ENCODE measurements at regions of chr2 and their contacts with region 1.

Region 1: DNA sequence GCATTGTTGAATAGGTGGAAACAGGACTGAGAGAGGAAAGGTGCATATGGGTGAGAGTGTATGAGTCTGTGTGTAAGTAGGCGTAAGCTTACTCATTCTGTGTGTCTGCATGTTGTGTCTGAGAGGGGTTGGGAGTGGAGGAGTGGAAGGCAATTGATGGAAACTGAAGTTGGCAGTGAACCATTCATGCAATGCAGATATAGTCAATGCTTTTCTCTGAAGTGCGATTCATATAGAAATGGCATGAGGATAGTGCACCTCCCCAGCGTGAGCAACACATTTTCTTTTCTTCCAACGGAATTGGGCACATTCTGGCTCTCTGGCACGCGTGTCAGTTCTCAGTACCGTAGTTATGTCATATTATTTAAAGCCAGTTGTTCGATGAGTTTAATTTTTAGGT is 250.5 kb downstream of the NYAP2 start:
- DNase-seq: no peak
- H3K4me3 ChIP-seq: no peak overlapping the region
- H3K27ac ChIP-seq: no peak overlapping the region
- H3K4me1 ChIP-seq: no peaks in the 10 kb centered on the region
- H3K27me3 ChIP-seq: no peaks in the 10 kb centered on the region
- CTCF ChIP-seq: no peak
- POLR2A ChIP-seq: no peak

Region 2: GRCh38 chr2:225122583-225123486 is 527.2 kb before region 1 on chr2:
- intact Hi-C with region 1: loop called (anchors 10 kb)
- DNase-seq: peak in 1 of 2 donors; percentile 7
- H3K4me3 ChIP-seq: no peak overlapping the region
- H3K27ac ChIP-seq: no peak overlapping the region
- H3K4me1 ChIP-seq: no peaks in the 10 kb centered on the region
- H3K27me3 ChIP-seq: no peaks in the 10 kb centered on the region
- CTCF ChIP-seq: peak in 5 of 6 experiments; percentile 24 to 59 (median 36)
- POLR2A ChIP-seq: no peak

Region 3: DNA sequence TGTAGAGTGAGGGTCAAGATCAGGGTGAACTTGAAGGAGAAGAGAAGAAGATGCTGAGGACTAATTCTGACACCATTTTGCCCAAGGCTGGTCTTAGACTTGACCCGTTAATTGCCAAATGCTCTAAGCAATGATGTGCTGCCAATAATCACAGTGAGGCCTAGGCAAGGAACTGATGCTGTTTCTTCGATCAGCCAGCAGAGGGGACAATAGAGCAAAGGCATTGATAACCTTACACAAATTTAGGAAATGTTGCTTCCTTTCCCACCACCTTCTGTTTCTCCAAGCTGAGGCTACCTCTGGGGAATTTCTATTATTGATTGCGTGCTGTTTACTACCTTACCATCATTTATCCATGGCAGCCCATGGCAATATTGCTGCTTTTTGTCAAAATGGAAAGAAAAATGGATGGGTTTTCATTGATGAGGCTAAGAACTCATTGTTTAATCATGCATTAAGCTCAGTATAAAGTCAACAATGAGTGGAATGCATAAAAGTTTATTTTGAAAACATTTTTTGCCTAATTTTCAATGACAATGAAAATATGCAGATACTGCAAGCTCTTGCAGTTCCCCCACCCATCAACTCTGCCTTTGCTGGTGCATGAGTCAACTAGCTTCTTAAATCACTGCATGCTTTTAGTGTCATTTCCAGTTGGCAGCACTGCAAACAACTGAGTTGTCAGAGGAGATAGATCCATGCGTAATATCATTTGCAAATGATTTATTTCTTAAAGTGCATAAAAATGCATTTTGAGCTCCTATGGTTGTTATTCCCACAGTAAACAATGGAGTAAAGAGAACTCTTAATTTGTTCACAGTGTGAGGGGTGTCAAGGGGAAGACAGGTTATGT is 367.0 kb before region 1 on chr2:
- intact Hi-C with region 1: loop called (anchors 10 kb)
- DNase-seq: peak; percentile 6 to 8
- H3K4me3 ChIP-seq: no peak overlapping the region
- H3K27ac ChIP-seq: no peak overlapping the region
- H3K4me1 ChIP-seq: no peaks in the 10 kb centered on the region
- H3K27me3 ChIP-seq: no peaks in the 10 kb centered on the region
- CTCF ChIP-seq: peak; percentile 22 to 70 (median 51)
- POLR2A ChIP-seq: no peak

Measured in thyroid gland (tissue), 4 donors.